ENCODE measurements at regions of chr14 and their contacts with region 1.

Region 1: DNA sequence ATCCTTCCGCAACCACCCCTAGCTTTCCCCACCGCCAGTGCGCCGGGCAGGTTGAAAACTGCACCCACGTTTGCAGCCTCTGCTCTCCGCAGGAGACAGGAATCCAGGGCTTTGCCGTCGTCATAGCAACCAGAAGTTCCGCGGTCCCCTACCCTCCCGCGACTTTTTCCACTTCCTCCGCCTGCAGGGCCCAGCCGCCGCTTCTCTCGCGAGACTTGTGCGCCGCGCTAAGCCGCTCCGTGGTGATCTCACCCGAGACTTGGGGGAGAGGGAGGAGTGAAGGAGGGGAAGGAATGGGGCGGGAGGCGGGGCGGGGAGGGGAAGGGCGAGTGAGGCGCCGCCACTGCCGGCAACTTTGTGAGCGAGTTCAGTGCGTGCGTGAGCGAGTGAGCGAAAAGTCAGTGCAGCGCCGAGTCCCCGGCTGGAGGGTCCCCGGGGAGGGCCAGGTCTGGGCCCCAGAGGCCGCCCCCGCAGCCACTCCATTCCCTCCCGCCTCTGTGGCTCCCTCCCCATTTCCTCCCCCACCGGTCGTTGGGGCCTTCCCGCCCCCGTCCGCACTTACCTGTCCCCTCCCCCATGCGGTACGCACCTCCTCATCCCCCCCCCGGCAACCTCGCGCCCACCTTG is 413.0 kb downstream of the PCNX1 start:
- DNase-seq: peak; percentile 99
- H3K4me3 ChIP-seq: peak within 1 kb of the TSS; percentile 92 to 98 (median 97)
- H3K27ac ChIP-seq: peak within 1 kb of the TSS; percentile 97
- H3K4me1 ChIP-seq: peaks cover 20% of the 10 kb centered on the region
- H3K27me3 ChIP-seq: no peaks in the 10 kb centered on the region
- CTCF ChIP-seq: no peak

Region 2: DNA sequence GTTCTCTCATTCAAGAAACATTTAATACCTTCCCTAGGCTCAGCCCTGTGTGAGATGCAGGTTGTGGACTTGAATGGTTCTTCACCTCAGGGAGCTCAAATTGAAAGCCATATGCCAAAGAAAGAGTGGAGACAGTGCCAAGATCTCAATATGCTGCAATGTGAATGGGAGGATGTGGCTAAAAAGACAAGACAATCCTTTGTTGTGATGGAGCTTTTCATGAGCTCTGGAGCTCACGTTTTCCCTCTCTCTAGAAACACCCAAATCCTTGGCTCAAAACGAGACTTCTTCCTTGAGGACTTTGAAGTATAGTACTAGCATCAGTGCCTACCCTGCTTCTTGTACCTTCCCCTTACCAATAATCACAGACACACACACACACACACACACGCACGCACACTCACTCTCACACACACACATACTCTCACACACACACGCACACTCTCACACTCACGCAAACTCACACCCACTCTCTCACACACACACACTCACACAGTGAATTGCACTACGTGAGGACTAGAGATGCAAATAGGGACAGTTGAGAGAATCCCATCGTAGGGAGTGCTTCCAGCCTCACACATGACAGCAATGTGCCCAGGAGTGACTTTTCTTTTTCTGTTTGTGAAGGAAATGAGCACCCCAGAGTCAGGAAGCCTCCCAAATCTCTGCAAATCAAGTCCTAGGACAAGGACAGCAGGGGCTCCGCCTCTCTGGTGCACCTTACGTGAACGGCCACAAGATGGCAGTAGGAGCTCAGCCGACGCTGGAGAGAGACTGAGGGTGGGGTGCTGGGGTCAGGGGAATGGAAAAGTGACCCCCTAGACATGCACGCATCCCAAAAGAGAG is 181.5 kb before region 1 on chr14:
- CTCF ChIA-PET with region 1: no interaction called
- dilution Hi-C with region 1: no loop called
- in situ Hi-C with region 1: no loop called
- intact Hi-C with region 1: loop called (anchors 1 kb)
- DNase-seq: peak; percentile 31
- H3K4me3 ChIP-seq: no peak overlapping the region
- H3K27ac ChIP-seq: no peak overlapping the region
- H3K4me1 ChIP-seq: peaks cover 29% of the 10 kb centered on the region
- H3K27me3 ChIP-seq: no peaks in the 10 kb centered on the region
- CTCF ChIP-seq: peak; percentile 89 to 98

Region 3: GRCh38 chr14:71355324-71356201 is 35.3 kb after region 1 on chr14:
- CTCF ChIA-PET with region 1: no interaction called
- dilution Hi-C with region 1: no loop called
- in situ Hi-C with region 1: no loop called
- intact Hi-C with region 1: loop called (anchors 2 kb)
- DNase-seq: peak; percentile 38
- H3K4me3 ChIP-seq: peak overlapping the region in 2 of 3 experiments; percentile 6 to 20
- H3K27ac ChIP-seq: peak overlapping the region; percentile 77
- H3K4me1 ChIP-seq: peaks cover 17% of the 10 kb centered on the region
- H3K27me3 ChIP-seq: no peaks in the 10 kb centered on the region
- CTCF ChIP-seq: no peak

Region 4: GRCh38 chr14:71403656-71404055 is 83.4 kb after region 1 on chr14:
- CTCF ChIA-PET with region 1: interaction called, 3 read pairs
- dilution Hi-C with region 1: no loop called
- in situ Hi-C with region 1: no loop called
- intact Hi-C with region 1: loop called (anchors 1 kb)
- DNase-seq: peak; percentile 23
- H3K4me3 ChIP-seq: no peak overlapping the region
- H3K27ac ChIP-seq: no peak overlapping the region
- H3K4me1 ChIP-seq: peaks cover 13% of the 10 kb centered on the region
- H3K27me3 ChIP-seq: no peaks in the 10 kb centered on the region
- CTCF ChIP-seq: peak in 1 of 2 donors; percentile 37

Region 5: DNA sequence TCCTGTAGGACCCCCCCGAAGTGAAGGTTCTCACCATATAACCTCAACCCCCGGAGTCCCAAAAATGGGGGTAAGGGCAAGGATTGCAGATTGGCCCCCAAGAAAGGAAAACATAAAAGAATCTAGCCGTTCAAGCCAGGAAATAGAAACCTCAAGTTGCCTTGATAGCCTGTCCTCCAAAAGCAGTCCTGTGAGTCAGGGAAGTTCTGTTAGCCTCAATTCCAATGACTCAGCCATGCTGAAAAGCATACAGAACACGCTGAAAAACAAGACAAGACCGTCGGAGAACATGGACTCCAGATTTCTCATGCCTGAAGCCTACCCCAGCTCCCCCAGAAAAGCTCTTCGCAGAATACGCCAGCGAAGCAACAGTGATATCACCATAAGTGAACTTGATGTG is 267.8 kb after region 1 on chr14:
- CTCF ChIA-PET with region 1: no interaction called
- dilution Hi-C with region 1: no loop called
- in situ Hi-C with region 1: no loop called
- intact Hi-C with region 1: loop called (anchors 2 kb)
- DNase-seq: no peak
- H3K4me3 ChIP-seq: no peak overlapping the region
- H3K27ac ChIP-seq: no peak overlapping the region
- H3K4me1 ChIP-seq: peaks cover 11% of the 10 kb centered on the region
- H3K27me3 ChIP-seq: no peaks in the 10 kb centered on the region
- CTCF ChIP-seq: no peak

Region 6: DNA sequence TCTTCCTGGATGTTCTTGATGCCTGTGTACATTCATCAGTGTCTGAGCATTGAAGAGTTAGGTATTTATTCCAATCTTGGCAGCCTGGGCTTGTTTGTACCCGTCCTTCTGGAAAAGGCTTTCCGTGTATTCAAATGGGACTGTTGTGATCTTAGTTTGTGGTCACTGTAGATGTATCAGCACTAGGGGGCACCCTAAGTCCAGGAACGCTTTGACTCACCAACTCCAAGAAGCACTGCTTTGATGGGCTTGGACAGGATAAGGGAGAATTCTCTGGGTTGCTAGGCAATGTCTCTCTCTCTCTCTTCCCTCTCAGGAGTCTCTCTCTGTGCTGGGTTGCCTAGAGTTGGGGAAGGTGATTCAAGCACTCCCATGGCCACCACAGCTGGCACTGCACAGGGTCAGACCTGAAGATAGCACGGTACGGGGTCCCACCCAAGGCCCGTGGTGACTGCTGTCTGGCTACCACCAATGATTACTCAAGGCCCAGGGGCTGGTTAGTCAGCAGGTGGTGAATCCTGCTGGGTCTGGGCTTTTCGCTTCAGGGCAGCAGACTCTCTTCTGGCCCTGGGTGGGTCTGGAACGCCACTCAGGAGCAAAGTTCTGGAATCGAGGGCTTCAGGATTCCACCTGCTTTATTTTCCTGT is 400.9 kb after region 1 on chr14:
- CTCF ChIA-PET with region 1: no interaction called
- dilution Hi-C with region 1: no loop called
- in situ Hi-C with region 1: no loop called
- intact Hi-C with region 1: loop called (anchors 2 kb)
- DNase-seq: peak; percentile 86
- H3K4me3 ChIP-seq: no peak overlapping the region
- H3K27ac ChIP-seq: no peak overlapping the region
- H3K4me1 ChIP-seq: peaks cover 19% of the 10 kb centered on the region
- H3K27me3 ChIP-seq: no peaks in the 10 kb centered on the region
- CTCF ChIP-seq: peak; percentile 48 to 79

Region 7: GRCh38 chr14:71855399-71856036 is 535.3 kb after region 1 on chr14:
- CTCF ChIA-PET with region 1: no interaction called
- dilution Hi-C with region 1: no loop called
- in situ Hi-C with region 1: no loop called
- intact Hi-C with region 1: loop called (anchors 10 kb)
- DNase-seq: peak; percentile 56
- H3K4me3 ChIP-seq: no peak overlapping the region
- H3K27ac ChIP-seq: no peak overlapping the region
- H3K4me1 ChIP-seq: no peaks in the 10 kb centered on the region
- H3K27me3 ChIP-seq: no peaks in the 10 kb centered on the region
- CTCF ChIP-seq: peak; percentile 75 to 86

Measured in mammary epithelial cell (primary cell).